PC-9 (cell line): ENCODE measurements at regions of chr5 and their contacts with region 1.

Region 1: GRCh38 chr5:76838481-76839261 is 11.1 kb upstream of the S100Z start:
- DNase-seq: peak; percentile 45 to 91
- H3K4me3 ChIP-seq: no peak overlapping the region; the same call in 1 of the 2 replicates
- H3K27ac ChIP-seq: peak overlapping the region; percentile 91
- H3K4me1 ChIP-seq: peaks cover 57% of the 10 kb centered on the region
- H3K27me3 ChIP-seq: no peaks in the 10 kb centered on the region
- CTCF ChIP-seq: no peak

Region 2: GRCh38 chr5:76818844-76819831 is 19.5 kb before region 1 on chr5 and contains the start of gene F2RL1:
- CTCF ChIA-PET with region 1: no interaction called
- POLR2A ChIA-PET with region 1: interaction called, 15 read pairs
- intact Hi-C with region 1: loop called (anchors 2 kb)
- DNase-seq: peak; percentile 93 to 94
- H3K4me3 ChIP-seq: peak within 1 kb of the TSS; percentile 95
- H3K27ac ChIP-seq: peak within 1 kb of the TSS; percentile 91
- H3K4me1 ChIP-seq: peaks cover 73% of the 10 kb centered on the region
- H3K27me3 ChIP-seq: no peaks in the 10 kb centered on the region
- CTCF ChIP-seq: 0 out of 2 replicates have a peak, but pooled peaks have one; percentile 3
- total RNA-seq, gene F2RL1: 34.5 and 34.6 TPM in 2 replicates